GM13977 (cell line): ENCODE measurements at regions of chr15 and their contacts with region 1.

Region 1: GRCh38 chr15:38563723-38564519 is 693 bp downstream of the RASGRP1 start:
- DNase-seq: peak; percentile 82
- CTCF ChIP-seq: peak; percentile 98

Region 2: DNA sequence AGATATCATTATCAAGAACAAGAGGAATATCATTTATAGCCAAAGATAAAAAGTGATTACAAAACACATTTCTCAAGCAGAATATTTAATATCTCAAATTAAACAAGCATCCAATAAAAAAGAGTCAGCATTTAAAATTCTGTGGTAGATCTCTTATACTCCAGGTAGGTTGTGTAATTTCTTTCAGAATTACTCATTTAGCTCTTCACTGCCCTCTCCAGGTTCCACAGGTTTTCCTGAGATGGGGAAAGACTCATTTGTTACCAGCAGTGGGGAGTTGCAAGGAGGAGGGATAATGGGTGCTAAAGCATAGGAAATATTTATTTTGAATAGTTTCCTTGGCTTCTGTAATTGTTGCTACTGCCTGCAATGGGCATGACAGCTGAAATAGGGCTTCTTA is 83.8 kb after region 1 on chr15:
- in situ Hi-C with region 1: loop called (anchors 10 kb)
- DNase-seq: no peak
- CTCF ChIP-seq: no peak

Region 3: DNA sequence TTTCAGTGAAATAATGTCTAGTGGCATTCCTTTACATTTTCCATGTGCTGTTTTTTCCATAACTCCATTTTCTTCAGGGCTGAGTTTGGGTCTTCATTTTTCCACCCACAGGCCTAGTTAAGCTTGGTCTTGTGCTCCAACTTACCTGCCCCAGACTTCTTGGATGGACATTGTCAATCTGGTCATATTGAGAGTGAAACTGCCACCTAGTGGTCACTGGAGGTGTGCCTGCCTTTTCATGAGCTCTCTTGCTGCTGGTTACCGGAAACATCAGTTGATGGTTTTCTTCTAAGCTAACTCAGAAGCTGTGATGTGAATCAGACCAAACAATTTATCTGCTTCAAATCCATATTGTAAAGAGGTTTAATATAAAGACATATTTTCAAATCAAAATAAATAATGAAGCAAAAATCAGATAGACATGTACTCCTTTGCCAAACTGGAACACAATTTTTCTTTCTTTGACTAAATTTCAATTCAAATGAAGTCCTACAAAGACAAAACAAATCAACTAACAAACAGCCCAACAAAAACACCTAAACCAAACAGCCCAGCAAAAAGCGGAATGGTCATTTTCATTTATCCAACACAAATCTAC is 135.8 kb after region 1 on chr15:
- in situ Hi-C with region 1: loop called (anchors 10 kb)
- DNase-seq: peak; percentile 51
- CTCF ChIP-seq: peak; percentile 86

Region 4: GRCh38 chr15:39199076-39199475 is 635.2 kb after region 1 on chr15:
- in situ Hi-C with region 1: no loop called
- DNase-seq: no peak
- CTCF ChIP-seq: no peak